Activated T-helper 2 cell treated with anti-CD3 and anti-CD28 coated beads, Interferon-gamma antibody, Interleukin-2, Interleukin-4, amounts not matched to agents 10 μg/mL and 5 μg/mL and 100 μg/mL, durations not matched to agents 14 hours and 24 hours and 36 hours (primary cell): ENCODE measurements at regions of chr1 and their contacts with region 1.

Region 1: DNA sequence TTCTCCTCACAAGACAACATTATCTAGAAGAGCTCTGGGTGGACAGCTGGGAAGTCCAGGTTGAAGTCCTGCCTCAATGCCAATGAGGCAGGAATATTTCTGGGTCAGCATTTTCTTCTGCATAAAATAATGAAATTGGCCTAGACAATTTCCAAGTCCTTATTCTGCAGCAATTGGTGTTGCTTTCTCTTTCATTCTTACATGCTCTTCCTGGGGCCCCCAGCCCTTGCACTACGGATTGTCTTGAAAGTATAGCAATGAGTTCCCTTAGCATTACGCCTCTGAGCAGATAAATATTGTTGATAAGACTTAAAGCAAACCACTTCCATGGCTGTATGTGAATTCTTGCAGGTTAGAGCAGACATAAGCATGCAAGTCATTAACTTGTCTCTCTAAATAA is 188.5 kb downstream of the TGFBR3 start:
- DNase-seq: peak; percentile 73
- H3K4me3 Mint-ChIP-seq: peak overlapping the region; percentile 61
- H3K27ac Mint-ChIP-seq: peak overlapping the region; percentile 89
- H3K4me1 Mint-ChIP-seq: peaks cover 61% of the 10 kb centered on the region
- H3K27me3 Mint-ChIP-seq: no peaks in the 10 kb centered on the region

Region 2: DNA sequence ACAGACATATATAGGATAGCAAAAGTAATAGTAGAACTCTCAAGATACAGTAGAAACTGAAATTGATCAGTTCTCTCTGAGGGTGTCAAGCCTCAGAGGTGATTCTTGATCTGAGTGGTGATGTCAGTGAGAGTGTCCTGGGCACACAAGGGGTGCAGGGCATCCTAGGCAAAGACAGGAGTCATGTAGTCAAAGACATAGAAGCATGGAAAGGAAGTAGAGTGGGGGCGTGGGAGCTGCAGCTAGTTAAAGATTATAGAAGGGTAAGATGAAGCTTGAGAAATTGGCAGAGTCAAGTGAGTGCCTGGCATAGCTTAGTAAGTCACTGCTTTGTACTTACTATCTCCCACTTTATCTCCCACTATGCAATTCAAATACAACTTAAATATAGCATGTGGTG is 173.9 kb before region 1 on chr1:
- intact Hi-C with region 1: loop called (anchors 1 kb)
- DNase-seq: no peak
- H3K4me3 Mint-ChIP-seq: no peak overlapping the region
- H3K27ac Mint-ChIP-seq: peak overlapping the region; percentile 38
- H3K4me1 Mint-ChIP-seq: peaks cover 47% of the 10 kb centered on the region
- H3K27me3 Mint-ChIP-seq: no peaks in the 10 kb centered on the region

Region 3: DNA sequence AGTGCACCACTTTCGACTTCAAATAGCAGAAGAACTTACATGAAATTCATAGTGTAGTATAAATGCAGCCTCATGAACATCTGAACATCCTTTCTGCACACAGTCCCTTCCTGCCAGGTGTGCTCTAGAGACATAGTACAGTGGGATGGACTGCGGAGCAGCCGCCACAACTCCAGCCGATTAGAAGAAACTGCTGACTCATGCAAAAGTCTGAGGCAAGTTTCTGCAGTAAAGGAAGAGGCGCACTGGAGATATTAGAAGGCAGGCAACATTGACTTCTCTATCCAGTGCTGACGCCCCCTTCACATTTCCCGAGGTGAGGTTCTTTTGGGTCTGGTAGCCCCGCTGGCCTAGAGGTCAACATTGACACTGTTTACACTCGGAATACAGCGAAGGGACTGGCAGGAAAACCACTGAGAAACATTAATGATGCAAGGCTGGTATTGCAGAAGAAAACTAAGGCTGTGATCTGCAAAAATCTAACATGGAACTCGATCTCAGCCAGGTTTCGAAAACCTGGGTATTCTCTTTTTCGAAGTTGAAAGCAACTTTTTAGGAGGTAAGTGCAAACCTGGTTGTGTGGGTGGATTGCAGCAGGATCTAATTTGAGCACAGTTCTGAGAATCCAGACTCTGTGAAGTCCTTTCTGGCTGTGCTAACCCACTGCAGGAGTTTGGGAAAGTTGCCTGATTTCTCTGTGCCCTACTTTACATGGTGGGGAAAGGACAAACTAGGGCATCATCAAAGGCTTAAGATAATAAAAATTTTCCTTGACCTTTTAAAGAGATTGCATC is 106.0 kb before region 1 on chr1:
- intact Hi-C with region 1: loop called (anchors 5 kb)
- DNase-seq: peak; percentile 16
- H3K4me3 Mint-ChIP-seq: peak overlapping the region; percentile 45
- H3K27ac Mint-ChIP-seq: peak overlapping the region; percentile 82
- H3K4me1 Mint-ChIP-seq: peaks cover 35% of the 10 kb centered on the region
- H3K27me3 Mint-ChIP-seq: no peaks in the 10 kb centered on the region

Region 4: DNA sequence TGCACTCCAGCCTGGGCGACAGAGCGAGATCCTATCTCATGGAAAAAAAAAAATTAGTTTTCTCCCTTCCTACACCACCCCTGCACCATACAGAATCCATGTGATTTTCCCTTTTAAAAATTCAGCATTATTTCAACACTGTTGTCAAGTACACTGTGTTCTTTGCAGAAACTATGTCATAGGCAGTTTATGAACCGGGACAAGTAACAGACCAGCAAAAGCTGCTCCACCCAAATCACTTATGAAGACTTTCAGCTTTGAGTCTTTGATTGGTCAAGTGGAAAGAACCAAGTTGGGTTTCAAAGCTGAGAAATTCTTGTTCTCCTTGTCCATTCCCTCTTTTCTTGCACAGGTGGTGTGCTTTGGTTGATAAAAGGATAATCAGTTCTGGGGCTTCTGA is 23.8 kb before region 1 on chr1:
- intact Hi-C with region 1: loop called (anchors 1 kb)
- DNase-seq: no peak
- H3K4me3 Mint-ChIP-seq: no peak overlapping the region
- H3K27ac Mint-ChIP-seq: peak overlapping the region; percentile 71
- H3K4me1 Mint-ChIP-seq: peaks cover 33% of the 10 kb centered on the region
- H3K27me3 Mint-ChIP-seq: no peaks in the 10 kb centered on the region

Region 5: GRCh38 chr1:91732291-91733107 is 35.1 kb after region 1 on chr1:
- intact Hi-C with region 1: loop called (anchors 1 kb)
- DNase-seq: no peak
- H3K4me3 Mint-ChIP-seq: no peak overlapping the region
- H3K27ac Mint-ChIP-seq: peak overlapping the region; percentile 75
- H3K4me1 Mint-ChIP-seq: peaks cover 57% of the 10 kb centered on the region
- H3K27me3 Mint-ChIP-seq: no peaks in the 10 kb centered on the region